Heart left ventricle (tissue), 16 donors: ENCODE measurements at regions of chr2 and their contacts with region 1.

Region 1: DNA sequence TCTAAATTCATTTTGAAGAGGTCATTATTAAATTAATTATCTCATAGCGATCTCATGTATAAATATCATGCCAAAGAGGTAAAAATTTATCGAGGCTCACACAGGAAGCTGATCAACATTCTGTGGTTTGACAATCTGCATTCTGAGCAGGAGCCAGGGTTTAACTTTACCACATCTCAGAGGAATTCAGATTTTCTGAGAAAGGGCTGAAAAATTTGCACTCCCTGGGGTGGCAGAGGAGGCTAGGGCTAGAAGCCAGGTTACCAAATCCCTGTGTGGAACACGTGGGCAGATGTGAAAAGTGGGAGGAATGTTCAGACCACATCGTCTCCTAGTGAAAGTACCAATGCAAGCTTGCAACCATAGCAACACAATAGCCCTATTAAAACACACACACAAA is 63.5 kb upstream of the CTLA4 start:
- DNase-seq: peak in 3 of 5 donors; percentile 37 to 56 (median 39)
- ATAC-seq: peak; percentile 41 to 88 (median 82)
- H3K4me3 ChIP-seq: no peak overlapping the region
- H3K27ac ChIP-seq: peak overlapping the region in 5 of 12 donors; percentile 22 to 74 (median 56)
- H3K4me1 ChIP-seq: peaks cover 0 to 25% (median 0%) of the 10 kb centered on the region in 12 donors
- H3K27me3 ChIP-seq: no peaks in the 10 kb centered on the region
- CTCF ChIP-seq: no peak
- POLR2A ChIP-seq: no peak

Region 2: GRCh38 chr2:203706403-203706802 is 97.7 kb before region 1 on chr2 and contains the start of gene CD28:
- intact Hi-C with region 1: loop called in 1 of 10 experiments (anchors 10 kb)
- DNase-seq: peak in 4 of 5 donors; percentile 44 to 65 (median 60)
- ATAC-seq: peak in 2 of 4 donors; percentile 48 to 79
- H3K4me3 ChIP-seq: peak within 1 kb of the TSS in 4 of 12 donors; percentile 13 to 47 (median 26)
- H3K27ac ChIP-seq: peak within 1 kb of the TSS in 5 of 12 donors; percentile 1 to 73 (median 10)
- H3K4me1 ChIP-seq: peaks cover 0 to 38% (median 2%) of the 10 kb centered on the region in 12 donors
- H3K27me3 ChIP-seq: no peaks in the 10 kb centered on the region
- CTCF ChIP-seq: no peak
- POLR2A ChIP-seq: no peak
- total RNA-seq, gene CD28: 0.16 to 11.2 (median 0.83) TPM

Region 3: DNA sequence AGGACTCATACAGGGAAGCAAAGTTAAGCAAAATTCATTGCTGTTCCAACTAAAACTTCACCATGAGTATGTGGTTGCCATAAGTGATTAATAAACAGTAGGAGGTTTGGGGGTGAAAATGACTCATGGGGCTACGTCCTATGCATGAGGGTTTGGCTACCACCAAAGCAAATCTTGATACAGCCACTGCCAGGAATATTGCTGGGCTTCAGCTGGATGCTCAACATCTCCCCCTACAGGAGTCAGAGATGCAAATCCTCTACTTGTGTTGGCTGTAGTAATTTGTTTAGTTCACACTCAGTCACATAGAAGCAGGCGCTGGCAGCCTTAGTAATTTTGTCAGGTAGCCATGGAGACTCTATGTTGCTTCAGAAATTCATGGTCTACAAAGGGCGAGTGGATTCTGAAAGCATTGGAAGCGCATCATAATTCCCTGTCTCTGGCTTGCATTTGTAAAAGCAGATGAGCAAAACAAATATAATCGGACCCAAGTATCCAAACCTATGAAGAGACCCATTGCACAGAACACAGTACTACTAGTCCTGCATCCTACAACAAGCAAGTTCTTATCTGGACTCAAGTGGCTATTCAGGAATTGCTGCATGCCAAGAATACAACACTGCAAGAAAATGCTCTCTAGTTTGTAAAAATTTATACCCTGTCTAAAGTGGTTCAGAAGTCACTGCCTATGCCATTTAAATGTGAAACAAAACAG is 21.7 kb before region 1 on chr2:
- intact Hi-C with region 1: no loop called
- DNase-seq: peak in 4 of 5 donors; percentile 31 to 55 (median 40)
- ATAC-seq: peak in 3 of 4 donors; percentile 67 to 80 (median 69)
- H3K4me3 ChIP-seq: no peak overlapping the region
- H3K27ac ChIP-seq: peak overlapping the region in 4 of 12 donors; percentile 1 to 44 (median 14)
- H3K4me1 ChIP-seq: peaks cover 0 to 47% (median 21%) of the 10 kb centered on the region in 12 donors
- H3K27me3 ChIP-seq: no peaks in the 10 kb centered on the region
- CTCF ChIP-seq: peak; percentile 55 to 81 (median 70)
- POLR2A ChIP-seq: no peak